ENCODE measurements at regions of chr12 and their contacts with region 1.

Region 1: GRCh38 chr12:94980577-94980976 is 22.9 kb downstream of the NDUFA12 start:
- DNase-seq: no peak
- ATAC-seq: peak; percentile 64
- H3K4me3 Mint-ChIP-seq: no peak overlapping the region
- H3K27ac Mint-ChIP-seq: no peak overlapping the region
- H3K4me1 Mint-ChIP-seq: peaks cover 51% of the 10 kb centered on the region
- H3K27me3 Mint-ChIP-seq: no peaks in the 10 kb centered on the region

Region 2: GRCh38 chr12:94941440-94941862 is 39.1 kb before region 1 on chr12:
- CTCF ChIA-PET with region 1: interaction called, 3 read pairs
- POLR2A ChIA-PET with region 1: no interaction called
- intact Hi-C with region 1: loop called in 1 of 2 experiments (anchors 5 kb)
- DNase-seq: peak; percentile 79
- ATAC-seq: peak; percentile 96
- H3K4me3 Mint-ChIP-seq: peak overlapping the region; percentile 15
- H3K27ac Mint-ChIP-seq: peak overlapping the region; percentile 87
- H3K4me1 Mint-ChIP-seq: peaks cover 35% of the 10 kb centered on the region
- H3K27me3 Mint-ChIP-seq: peaks cover 7% of the 10 kb centered on the region

Measured in activated CD4-positive, alpha-beta T cell treated with anti-CD3 and anti-CD28 coated beads for 36 hours (primary cell).